ENCODE measurements at regions of chr7 and their contacts with region 1.

Region 1: DNA sequence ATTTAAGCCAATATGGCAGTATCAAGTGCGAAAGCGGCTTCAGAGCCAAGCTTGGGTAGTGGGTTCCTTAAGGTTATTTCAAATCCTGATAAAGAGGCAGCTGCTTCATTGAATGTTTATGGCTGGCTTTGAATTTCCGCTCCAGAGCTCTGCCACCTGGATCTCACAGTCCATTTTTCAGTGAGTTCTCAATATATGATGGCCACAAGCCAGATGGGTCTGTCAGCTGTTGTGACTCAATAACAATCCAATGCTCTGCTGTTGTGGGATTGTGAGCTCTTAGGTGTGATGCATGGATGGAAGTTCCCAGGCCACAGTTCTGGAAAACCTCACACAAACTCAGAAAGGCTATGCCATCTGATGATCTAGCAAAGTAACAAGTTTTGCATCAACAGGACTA is 743.8 kb upstream of the LRRN3 start:
- DNase-seq: no peak
- H3K4me3 ChIP-seq: no peak overlapping the region
- H3K4me3 Mint-ChIP-seq: no peak overlapping the region
- H3K27ac ChIP-seq: no peak overlapping the region
- H3K27ac Mint-ChIP-seq: no peak overlapping the region
- H3K4me1 ChIP-seq: no peaks in the 10 kb centered on the region
- H3K4me1 Mint-ChIP-seq: no peaks in the 10 kb centered on the region
- H3K27me3 ChIP-seq: no peaks in the 10 kb centered on the region
- H3K27me3 Mint-ChIP-seq: no peaks in the 10 kb centered on the region
- CTCF ChIP-seq: no peak

Region 2: DNA sequence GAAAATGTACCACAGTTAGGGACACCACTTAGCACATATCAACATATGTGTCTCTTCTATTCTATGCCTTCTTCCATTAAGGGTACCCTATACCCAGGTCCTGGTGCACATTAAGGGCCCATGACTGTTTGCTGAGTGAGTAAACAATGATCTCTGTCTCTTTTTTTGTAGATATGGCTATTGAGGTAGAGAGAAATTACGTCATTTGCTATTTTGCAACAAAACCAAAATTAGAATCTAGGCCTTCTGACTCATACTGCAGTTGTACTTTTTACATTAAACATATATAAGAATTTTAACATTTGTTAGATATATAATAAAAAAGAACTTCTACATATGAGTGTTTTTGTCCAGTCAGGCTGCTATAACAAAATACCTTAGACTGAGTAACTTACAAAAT is 60.6 kb after region 1 on chr7:
- intact Hi-C with region 1: loop called in 1 of 2 experiments (anchors 10 kb)
- DNase-seq: no peak
- H3K4me3 ChIP-seq: no peak overlapping the region
- H3K4me3 Mint-ChIP-seq: no peak overlapping the region
- H3K27ac ChIP-seq: no peak overlapping the region
- H3K27ac Mint-ChIP-seq: no peak overlapping the region
- H3K4me1 ChIP-seq: no peaks in the 10 kb centered on the region
- H3K4me1 Mint-ChIP-seq: no peaks in the 10 kb centered on the region
- H3K27me3 ChIP-seq: no peaks in the 10 kb centered on the region
- H3K27me3 Mint-ChIP-seq: no peaks in the 10 kb centered on the region
- CTCF ChIP-seq: no peak